Naive thymus-derived CD4-positive, alpha-beta T cell (primary cell): ENCODE measurements at regions of chr1 and their contacts with region 1.

Region 1: DNA sequence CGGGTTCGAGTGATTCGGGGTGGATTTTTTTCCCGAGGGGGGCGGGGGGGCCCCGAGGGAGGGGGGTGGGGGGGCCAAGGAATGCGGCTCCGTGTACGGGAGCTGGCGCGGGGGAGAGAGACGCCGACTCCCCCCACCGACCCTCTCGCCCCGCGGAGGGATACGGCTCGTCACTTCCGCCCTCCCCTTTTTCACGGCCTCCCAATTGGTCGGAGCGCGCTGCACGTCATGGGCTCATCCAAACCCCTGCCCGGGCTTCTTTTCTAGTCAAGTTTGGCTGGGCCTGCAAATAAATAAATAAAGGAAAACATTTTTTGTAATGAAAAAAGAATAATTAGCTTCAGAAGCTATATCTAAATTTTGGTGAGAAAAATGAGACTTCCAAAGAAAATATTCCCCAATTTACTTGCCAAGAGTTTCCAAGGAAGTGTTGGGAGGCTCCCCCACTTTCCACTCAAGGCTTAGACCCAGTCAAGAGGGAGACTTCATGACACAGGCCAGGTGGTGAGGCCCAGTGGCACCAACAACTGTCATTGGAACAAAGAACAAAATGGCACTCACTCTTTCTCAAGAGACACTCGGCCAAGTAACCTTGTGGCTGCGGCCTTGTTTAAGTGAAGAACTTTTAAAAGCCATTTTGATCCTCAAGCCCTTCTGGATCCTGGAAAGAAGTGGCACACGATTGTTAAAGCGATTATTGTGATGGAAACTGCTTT is at the start of gene POGZ:
- DNase-seq: peak; percentile 80 to 94 (median 93)
- ATAC-seq: peak; percentile 87
- H3K4me3 ChIP-seq: peak within 1 kb of the TSS; percentile 73
- H3K4me3 Mint-ChIP-seq: peak within 1 kb of the TSS; percentile 87 to 100 (median 91)
- H3K27ac ChIP-seq: peak within 1 kb of the TSS; percentile 81
- H3K27ac Mint-ChIP-seq: peak within 1 kb of the TSS; percentile 91 to 97 (median 96)
- H3K4me1 ChIP-seq: peaks cover 8 to 12% of the 10 kb centered on the region in 2 donors
- H3K4me1 Mint-ChIP-seq: peaks cover 15 to 43% (median 34%) of the 10 kb centered on the region in 7 donors
- H3K27me3 ChIP-seq: no peaks in the 10 kb centered on the region
- H3K27me3 Mint-ChIP-seq: peaks cover 15 to 25% (median 18%) of the 10 kb centered on the region in 5 donors
- total RNA-seq, gene POGZ: 83.7 to 143 (median 112) TPM

Region 2: GRCh38 chr1:150121236-150121862 is 1338.1 kb before region 1 on chr1:
- CTCF ChIA-PET with region 1: no interaction called
- POLR2A ChIA-PET with region 1: no interaction called
- intact Hi-C with region 1: no loop called
- DNase-seq: no peak
- ATAC-seq: no peak
- H3K4me3 ChIP-seq: no peak overlapping the region
- H3K4me3 Mint-ChIP-seq: no peak overlapping the region
- H3K27ac ChIP-seq: no peak overlapping the region
- H3K27ac Mint-ChIP-seq: peak overlapping the region in 1 of 9 donors; percentile 17
- H3K4me1 ChIP-seq: peaks cover 0 to 5% of the 10 kb centered on the region in 2 donors
- H3K4me1 Mint-ChIP-seq: peaks cover 0 to 8% (median 3%) of the 10 kb centered on the region in 7 donors
- H3K27me3 ChIP-seq: no peaks in the 10 kb centered on the region
- H3K27me3 Mint-ChIP-seq: no peaks in the 10 kb centered on the region

Region 3: GRCh38 chr1:150836129-150836773 is 623.2 kb before region 1 on chr1:
- CTCF ChIA-PET with region 1: no interaction called
- POLR2A ChIA-PET with region 1: no interaction called
- intact Hi-C with region 1: no loop called
- DNase-seq: no peak
- ATAC-seq: no peak
- H3K4me3 ChIP-seq: no peak overlapping the region
- H3K4me3 Mint-ChIP-seq: no peak overlapping the region
- H3K27ac ChIP-seq: no peak overlapping the region
- H3K27ac Mint-ChIP-seq: peak overlapping the region in 1 of 9 donors; percentile 39
- H3K4me1 ChIP-seq: peaks cover 0 to 13% of the 10 kb centered on the region in 2 donors
- H3K4me1 Mint-ChIP-seq: peaks cover 10 to 32% (median 23%) of the 10 kb centered on the region in 7 donors
- H3K27me3 ChIP-seq: no peaks in the 10 kb centered on the region
- H3K27me3 Mint-ChIP-seq: no peaks in the 10 kb centered on the region

Region 4: DNA sequence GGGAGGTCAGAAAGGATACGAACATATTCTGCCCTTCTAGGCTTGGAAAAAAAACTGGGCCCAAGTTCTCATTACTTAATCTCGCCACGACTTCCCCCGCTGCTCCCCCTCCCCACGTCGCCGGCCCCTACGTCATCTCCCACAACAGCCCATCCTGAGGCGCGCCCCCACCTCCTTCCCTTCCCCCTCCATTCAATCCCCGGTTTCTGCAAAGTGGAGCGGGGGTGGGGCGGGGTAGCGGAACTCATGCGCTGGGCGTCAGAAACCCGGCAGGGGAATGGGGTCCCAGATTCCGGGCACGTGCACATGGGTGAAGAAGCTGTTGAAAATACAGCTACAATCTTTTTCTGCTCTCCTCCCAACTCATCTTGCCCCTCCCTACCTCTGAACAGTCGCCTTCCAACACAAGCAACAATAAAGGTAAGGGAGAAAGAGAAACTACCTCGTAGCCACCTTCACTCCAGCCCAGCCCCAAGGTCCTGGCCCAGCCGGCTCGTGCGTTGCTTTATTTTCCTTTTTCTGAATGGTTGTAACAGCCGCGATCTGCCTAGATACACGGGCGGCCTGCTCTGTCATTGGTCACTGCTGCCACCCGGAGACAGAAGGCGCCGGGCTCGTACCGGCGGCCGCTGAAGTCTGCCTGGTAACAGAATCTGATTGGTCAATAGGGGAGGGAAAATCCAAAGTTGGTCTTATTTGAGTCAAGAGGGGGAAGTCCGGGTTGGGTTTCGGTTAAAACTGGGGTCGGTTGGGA is 112.5 kb before region 1 on chr1 and contains the start of gene RFX5:
- CTCF ChIA-PET with region 1: no interaction called
- POLR2A ChIA-PET with region 1: interaction called, 3 read pairs
- intact Hi-C with region 1: loop called (anchors 1 to 2 kb)
- DNase-seq: peak; percentile 73 to 98 (median 94)
- ATAC-seq: peak; percentile 95
- H3K4me3 ChIP-seq: peak within 1 kb of the TSS; percentile 75
- H3K4me3 Mint-ChIP-seq: peak within 1 kb of the TSS; percentile 85 to 98 (median 95)
- H3K27ac ChIP-seq: peak within 1 kb of the TSS; percentile 96
- H3K27ac Mint-ChIP-seq: peak within 1 kb of the TSS; percentile 95 to 100 (median 99)
- H3K4me1 ChIP-seq: peaks cover 13 to 16% of the 10 kb centered on the region in 2 donors
- H3K4me1 Mint-ChIP-seq: peaks cover 20 to 44% (median 39%) of the 10 kb centered on the region in 7 donors
- H3K27me3 ChIP-seq: no peaks in the 10 kb centered on the region
- H3K27me3 Mint-ChIP-seq: no peaks in the 10 kb centered on the region
- total RNA-seq, gene RFX5: 62.6 to 89.3 (median 82.2) TPM

Region 5: GRCh38 chr1:151472856-151473731 is 13.6 kb after region 1 on chr1:
- CTCF ChIA-PET with region 1: no interaction called
- POLR2A ChIA-PET with region 1: interaction called, 39 read pairs
- intact Hi-C with region 1: loop called (anchors 1 kb)
- DNase-seq: peak in 8 of 9 donors; percentile 9 to 37 (median 22)
- ATAC-seq: peak; percentile 42
- H3K4me3 ChIP-seq: peak overlapping the region; percentile 58
- H3K4me3 Mint-ChIP-seq: peak overlapping the region; percentile 74 to 89 (median 86)
- H3K27ac ChIP-seq: peak overlapping the region; percentile 58
- H3K27ac Mint-ChIP-seq: peak overlapping the region; percentile 44 to 90 (median 65)
- H3K4me1 ChIP-seq: peaks cover 0 to 4% of the 10 kb centered on the region in 2 donors
- H3K4me1 Mint-ChIP-seq: peaks cover 0 to 21% (median 7%) of the 10 kb centered on the region in 7 donors
- H3K27me3 ChIP-seq: no peaks in the 10 kb centered on the region
- H3K27me3 Mint-ChIP-seq: peaks cover 0 to 12% (median 9%) of the 10 kb centered on the region in 5 donors

Region 6: GRCh38 chr1:151539990-151540981 is 80.8 kb after region 1 on chr1 and contains the start of gene TUFT1:
- CTCF ChIA-PET with region 1: no interaction called
- POLR2A ChIA-PET with region 1: interaction called, 5 read pairs
- intact Hi-C with region 1: loop called in 1 of 2 experiments (anchors 1 kb)
- DNase-seq: peak; percentile 89 to 95 (median 93)
- ATAC-seq: peak; percentile 100
- H3K4me3 ChIP-seq: peak within 1 kb of the TSS; percentile 90
- H3K4me3 Mint-ChIP-seq: peak within 1 kb of the TSS; percentile 91 to 98 (median 97)
- H3K27ac ChIP-seq: peak within 1 kb of the TSS; percentile 71
- H3K27ac Mint-ChIP-seq: peak within 1 kb of the TSS; percentile 70 to 93 (median 89)
- H3K4me1 ChIP-seq: peaks cover 11 to 18% of the 10 kb centered on the region in 2 donors
- H3K4me1 Mint-ChIP-seq: peaks cover 12 to 31% (median 22%) of the 10 kb centered on the region in 7 donors
- H3K27me3 ChIP-seq: no peaks in the 10 kb centered on the region
- H3K27me3 Mint-ChIP-seq: peaks cover 6 to 24% (median 8%) of the 10 kb centered on the region in 5 donors
- total RNA-seq, gene TUFT1: 0.92 to 4.8 (median 3.4) TPM

Region 7: DNA sequence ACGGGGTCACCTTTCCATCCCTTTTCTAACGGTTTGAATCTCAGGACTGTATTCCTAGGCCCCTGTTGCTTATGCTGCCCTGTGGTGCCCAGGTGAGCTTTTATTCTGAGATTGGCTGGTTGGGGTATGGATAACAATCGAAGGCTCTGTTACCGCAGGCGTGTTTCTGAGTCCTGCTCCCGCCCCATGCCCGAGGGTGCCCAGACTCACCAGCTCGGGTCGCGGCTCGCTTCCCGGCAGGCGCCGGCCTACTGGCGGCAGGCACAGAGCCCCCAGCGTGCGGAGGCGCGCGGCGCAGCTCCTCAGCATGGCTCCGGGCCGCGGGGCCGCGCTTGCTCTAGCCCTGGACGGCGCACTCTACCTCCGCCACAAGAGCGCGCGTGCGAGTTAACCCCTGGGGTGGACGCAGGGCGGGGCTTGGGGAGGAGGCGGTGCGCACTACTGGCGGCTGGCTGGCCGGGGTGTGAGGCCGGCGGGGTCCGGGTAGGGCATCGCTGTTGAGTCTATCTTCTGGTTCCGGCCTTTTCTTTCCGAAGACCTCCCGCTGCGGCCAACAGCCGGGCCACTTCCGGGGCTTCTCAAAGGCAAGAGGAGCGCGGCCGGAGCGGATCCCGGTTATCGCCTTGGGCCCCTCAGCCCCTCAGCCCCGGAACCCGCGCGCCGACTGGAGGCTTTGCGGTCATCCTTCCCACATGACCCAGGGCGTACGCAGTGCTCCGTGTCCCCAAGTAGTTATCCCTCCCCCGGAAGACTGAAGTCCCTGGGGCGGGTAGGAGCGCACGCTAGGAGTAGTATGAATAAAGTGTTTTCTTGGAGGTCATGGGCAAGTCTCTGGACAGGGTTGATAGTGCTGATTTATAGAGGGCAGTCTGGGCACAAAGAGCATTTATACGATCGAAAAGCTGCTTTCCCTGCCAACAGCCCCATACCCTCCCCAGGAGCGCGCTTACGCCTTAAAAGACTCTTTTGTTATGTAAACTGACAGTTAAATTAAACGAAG is 450.0 kb after region 1 on chr1 and contains the start of gene THEM4:
- CTCF ChIA-PET with region 1: no interaction called
- POLR2A ChIA-PET with region 1: no interaction called
- intact Hi-C with region 1: loop called in 1 of 2 experiments (anchors 5 kb)
- DNase-seq: peak; percentile 67 to 94 (median 80)
- ATAC-seq: peak; percentile 97
- H3K4me3 ChIP-seq: peak within 1 kb of the TSS; percentile 67
- H3K4me3 Mint-ChIP-seq: peak within 1 kb of the TSS; percentile 79 to 93 (median 88)
- H3K27ac ChIP-seq: peak within 1 kb of the TSS; percentile 82
- H3K27ac Mint-ChIP-seq: peak within 1 kb of the TSS; percentile 82 to 98 (median 90)
- H3K4me1 ChIP-seq: peaks cover 23 to 39% of the 10 kb centered on the region in 2 donors
- H3K4me1 Mint-ChIP-seq: peaks cover 21 to 47% (median 37%) of the 10 kb centered on the region in 7 donors
- H3K27me3 ChIP-seq: no peaks in the 10 kb centered on the region
- H3K27me3 Mint-ChIP-seq: peaks cover 0 to 8% (median 0%) of the 10 kb centered on the region in 5 donors
- total RNA-seq, gene THEM4: 37.6 to 143 (median 44.6) TPM